ENCODE measurements at regions of chr3 and their contacts with region 1.

Region 1: DNA sequence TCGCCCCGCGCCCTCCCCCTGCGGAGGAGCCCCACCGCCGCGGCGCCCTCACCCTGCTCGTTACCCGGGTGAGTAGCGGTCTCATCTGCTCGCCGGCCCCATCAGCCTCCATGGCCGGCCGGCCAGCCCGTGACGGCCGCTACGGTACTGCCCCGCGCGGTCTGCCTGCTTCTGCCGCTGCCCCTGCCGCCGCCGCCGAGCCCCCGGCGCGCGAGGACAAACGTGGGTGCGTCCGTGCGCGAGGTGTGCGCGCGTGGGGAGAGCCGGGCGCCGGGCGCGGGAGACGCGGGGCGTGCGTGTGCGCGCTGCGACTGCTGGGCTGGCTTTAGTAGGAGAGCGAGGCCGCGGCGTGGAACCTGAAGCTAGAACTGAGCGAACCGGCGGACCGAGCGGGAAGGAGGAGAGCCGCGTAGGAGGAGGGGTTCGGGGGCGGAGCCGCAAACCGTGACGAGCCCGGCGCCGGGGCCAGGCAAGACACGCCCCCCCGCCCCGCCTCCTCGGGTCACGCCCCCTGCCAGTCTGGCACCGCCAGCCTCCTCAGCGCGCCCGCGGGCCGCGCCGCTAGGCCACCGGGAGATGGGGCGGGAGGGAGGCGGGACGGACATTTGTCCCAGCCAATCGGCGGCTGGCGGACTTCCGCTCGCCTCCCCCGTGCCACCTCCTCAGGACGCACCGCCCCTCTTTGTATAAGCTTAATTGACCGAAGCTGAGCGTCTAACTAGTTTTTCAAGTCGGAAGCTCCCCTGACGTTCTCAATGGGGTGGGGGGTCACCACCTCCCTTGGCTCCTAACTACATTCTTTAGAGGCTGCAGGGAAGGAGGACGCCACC is at the start of gene SLC4A7:
- DNase-seq: peak; percentile 99
- H3K4me3 ChIP-seq: peak within 1 kb of the TSS; percentile 82 to 97 (median 87)
- H3K27ac ChIP-seq: peak within 1 kb of the TSS; percentile 96 to 100 (median 97)
- H3K4me1 ChIP-seq: peaks cover 7 to 71% (median 59%) of the 10 kb centered on the region in 4 donors
- H3K27me3 ChIP-seq: no peaks in the 10 kb centered on the region
- CTCF ChIP-seq: no peak
- EP300 ChIP-seq: no peak
- POLR2A ChIP-seq: peak; percentile 91
- total RNA-seq, gene SLC4A7: 20.3 to 44.0 (median 31.7) TPM

Region 2: DNA sequence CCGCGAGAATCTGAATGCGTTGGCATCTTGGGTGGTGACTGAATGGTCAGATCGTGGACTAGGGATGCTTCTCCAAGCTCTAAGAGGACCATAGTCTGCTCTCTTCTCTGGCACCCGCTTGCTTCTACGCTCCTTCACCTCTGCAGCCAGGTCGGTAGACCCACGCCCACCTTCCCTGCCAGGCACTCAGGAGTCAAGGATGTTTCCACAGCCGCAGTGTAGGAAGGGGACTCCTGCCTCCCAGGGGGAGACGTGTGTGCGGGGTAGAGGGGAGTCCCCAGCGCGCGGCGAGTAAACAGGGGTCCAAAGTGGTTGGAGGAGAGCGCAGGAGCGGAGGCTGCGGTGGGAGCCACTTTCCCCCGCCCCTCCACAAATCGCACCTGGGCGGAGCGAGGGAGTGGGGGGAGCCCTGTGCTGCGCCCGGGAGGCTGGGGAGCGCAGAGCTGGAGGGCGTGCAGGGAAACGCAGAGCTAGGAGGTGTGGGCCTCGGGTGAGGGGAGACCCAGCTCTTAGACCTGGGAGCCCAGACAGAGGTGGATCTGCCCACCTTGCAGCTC is 859.9 kb before region 1 on chr3:
- intact Hi-C with region 1: no loop called
- DNase-seq: no peak
- H3K4me3 ChIP-seq: peak overlapping the region; percentile 44 to 58 (median 50)
- H3K27ac ChIP-seq: no peak overlapping the region
- H3K4me1 ChIP-seq: peaks cover 12 to 30% (median 26%) of the 10 kb centered on the region in 4 donors
- H3K27me3 ChIP-seq: peaks cover 0 to 47% (median 18%) of the 10 kb centered on the region in 4 donors
- CTCF ChIP-seq: no peak
- EP300 ChIP-seq: no peak
- POLR2A ChIP-seq: no peak

Region 3: GRCh38 chr3:27141668-27142067 is 342.6 kb before region 1 on chr3:
- intact Hi-C with region 1: no loop called
- DNase-seq: no peak
- H3K4me3 ChIP-seq: no peak overlapping the region
- H3K27ac ChIP-seq: no peak overlapping the region
- H3K4me1 ChIP-seq: peaks cover 0 to 7% (median 0%) of the 10 kb centered on the region in 4 donors
- H3K27me3 ChIP-seq: no peaks in the 10 kb centered on the region
- CTCF ChIP-seq: no peak
- EP300 ChIP-seq: no peak
- POLR2A ChIP-seq: no peak

Region 4: DNA sequence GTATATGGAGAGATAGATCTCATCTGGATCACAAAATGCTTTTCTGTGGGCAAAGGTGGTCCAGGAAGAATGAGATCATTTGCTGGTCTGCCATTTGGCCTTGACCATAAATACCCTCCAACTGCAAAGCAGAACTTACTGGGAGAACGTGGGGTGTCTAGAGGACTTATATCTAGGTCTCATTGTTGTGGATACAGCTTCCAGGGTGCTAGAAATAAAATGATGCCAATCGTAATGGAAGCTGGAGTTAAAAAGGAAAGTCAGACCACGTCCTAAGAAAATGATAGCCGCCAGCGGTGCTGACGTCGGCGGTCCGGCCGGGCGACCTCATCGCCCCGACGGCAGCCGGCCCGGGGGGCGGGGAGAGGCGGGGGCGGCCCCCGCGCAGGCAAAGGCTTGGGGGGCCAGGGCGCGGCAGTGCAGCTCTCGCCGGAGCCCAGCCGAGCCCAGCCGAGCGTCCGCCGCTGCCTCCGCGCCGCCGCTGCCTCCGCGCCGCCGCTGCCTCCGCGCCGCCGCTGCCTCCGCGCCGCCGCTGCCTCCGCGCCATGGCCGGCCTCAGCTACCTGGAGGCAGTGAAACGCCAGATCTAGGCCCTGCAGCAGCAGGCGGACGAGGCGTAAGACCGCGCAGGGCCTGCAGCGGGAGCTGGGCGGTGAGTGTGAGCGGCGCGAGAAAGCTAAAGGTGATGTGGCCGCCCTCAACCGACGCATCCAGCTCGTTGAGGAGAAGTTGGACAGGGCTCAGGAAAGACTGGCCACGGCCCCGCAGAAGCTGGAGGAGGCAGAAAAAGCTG is 148.4 kb after region 1 on chr3:
- intact Hi-C with region 1: loop called (anchors 5 kb)
- DNase-seq: no peak
- H3K4me3 ChIP-seq: peak overlapping the region; percentile 58 to 65 (median 61)
- H3K27ac ChIP-seq: peak overlapping the region; percentile 76 to 87 (median 84)
- H3K4me1 ChIP-seq: peaks cover 0 to 14% (median 12%) of the 10 kb centered on the region in 4 donors
- H3K27me3 ChIP-seq: no peaks in the 10 kb centered on the region
- CTCF ChIP-seq: no peak
- EP300 ChIP-seq: no peak
- POLR2A ChIP-seq: no peak

Region 5: DNA sequence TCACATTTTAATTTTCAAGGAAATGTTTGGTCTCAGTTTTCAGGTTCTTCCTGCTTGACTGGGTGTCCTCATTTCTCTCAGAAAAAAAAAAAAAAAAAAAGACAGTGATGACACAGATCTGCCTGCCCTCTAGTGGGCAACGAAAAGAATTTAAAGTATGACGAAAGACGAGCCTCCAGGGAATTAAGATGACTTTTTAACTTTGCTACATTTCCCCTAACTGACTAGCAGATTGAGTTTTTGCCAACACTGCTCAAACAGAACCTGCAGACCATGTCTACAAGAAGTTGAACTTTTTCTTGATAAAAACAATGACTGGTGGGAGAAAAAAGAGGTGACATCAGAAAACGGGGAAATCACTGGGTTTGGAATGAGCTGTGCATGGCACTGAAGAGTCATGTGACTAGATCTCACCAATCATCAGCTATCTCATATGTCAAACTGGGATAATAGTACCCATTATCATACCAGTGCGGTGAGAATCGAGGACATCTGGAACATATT is 197.1 kb after region 1 on chr3:
- intact Hi-C with region 1: loop called (anchors 5 kb)
- DNase-seq: no peak
- H3K4me3 ChIP-seq: peak overlapping the region in 2 of 4 donors; percentile 35
- H3K27ac ChIP-seq: no peak overlapping the region
- H3K4me1 ChIP-seq: peaks cover 0 to 20% (median 10%) of the 10 kb centered on the region in 4 donors
- H3K27me3 ChIP-seq: no peaks in the 10 kb centered on the region
- CTCF ChIP-seq: peak; percentile 52 to 62 (median 60)
- EP300 ChIP-seq: no peak
- POLR2A ChIP-seq: no peak

Region 6: DNA sequence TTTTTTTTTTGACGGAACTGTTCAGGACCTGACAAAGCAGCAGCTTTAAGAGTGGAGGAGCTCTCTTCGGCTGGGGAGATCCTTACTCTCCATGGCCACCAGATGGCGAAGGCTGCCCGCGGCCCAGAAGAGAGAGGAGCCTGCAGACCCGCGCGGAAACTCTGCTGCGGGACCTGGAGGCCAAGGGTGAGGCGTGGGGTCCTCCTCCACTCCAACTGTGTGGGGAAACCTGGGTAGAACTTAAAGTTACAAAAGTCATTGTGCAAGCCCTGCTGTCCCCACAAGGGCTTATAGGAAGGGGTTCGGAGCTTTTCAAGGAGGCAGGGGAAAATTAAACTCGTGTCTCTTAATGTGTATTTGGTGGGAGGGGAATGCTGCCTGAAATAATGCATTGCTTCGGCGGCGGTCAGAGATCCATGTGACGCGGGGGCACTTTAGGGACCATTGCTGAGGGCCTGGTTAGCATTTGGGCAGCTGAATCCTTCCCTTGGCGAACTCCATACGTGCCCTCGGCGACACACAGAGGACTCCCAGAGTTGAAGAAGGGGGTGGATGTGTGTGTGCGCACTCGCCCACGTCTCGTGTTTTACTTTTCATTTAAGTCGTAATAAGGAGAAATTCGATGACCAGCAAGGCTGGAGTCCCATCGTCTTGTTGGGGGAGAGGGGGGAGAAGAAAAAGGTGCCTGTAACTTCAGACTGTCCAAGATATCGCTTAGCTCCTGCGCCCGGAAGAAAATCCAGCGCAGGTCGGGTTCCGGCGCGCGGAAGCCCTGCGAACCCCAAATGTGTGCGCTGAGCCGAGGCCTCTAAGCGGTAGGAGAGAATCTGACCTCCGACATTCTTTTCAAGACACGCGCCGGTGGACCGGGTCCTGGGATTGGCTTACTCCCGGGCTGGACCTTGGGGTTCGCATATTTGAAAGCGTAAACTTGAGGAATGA is 228.2 kb after region 1 on chr3:
- intact Hi-C with region 1: no loop called
- DNase-seq: peak; percentile 94
- H3K4me3 ChIP-seq: peak overlapping the region; percentile 50 to 68 (median 57)
- H3K27ac ChIP-seq: peak overlapping the region in 1 of 4 donors; percentile 26
- H3K4me1 ChIP-seq: peaks cover 26 to 38% (median 31%) of the 10 kb centered on the region in 4 donors
- H3K27me3 ChIP-seq: peaks cover 5 to 43% (median 25%) of the 10 kb centered on the region in 4 donors
- CTCF ChIP-seq: peak; percentile 68 to 81 (median 69)
- EP300 ChIP-seq: no peak
- POLR2A ChIP-seq: no peak